PC-9 (cell line): ENCODE measurements at regions of chr1 and their contacts with region 1.

Region 1: DNA sequence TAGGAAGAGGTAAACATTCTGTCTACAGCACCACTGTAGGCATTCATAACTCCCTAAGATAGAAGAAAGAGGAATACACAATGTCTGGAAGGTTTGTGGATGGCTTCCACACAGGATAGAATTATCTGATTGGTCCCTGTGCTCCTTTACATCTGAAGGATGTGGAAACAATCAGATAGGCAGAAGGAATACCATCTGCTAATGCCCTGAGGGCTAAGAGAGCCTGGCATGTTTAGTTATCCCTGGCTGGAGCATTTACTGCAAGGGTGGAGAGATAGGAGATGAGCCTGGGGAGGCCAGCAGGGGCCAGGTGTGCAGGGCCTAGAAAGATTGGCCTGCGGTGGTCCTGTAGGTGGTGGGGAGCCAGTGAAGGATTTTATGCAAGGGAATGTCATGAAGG is 8.6 kb upstream of the ACBD3 start:
- DNase-seq: no peak
- H3K4me3 ChIP-seq: no peak overlapping the region
- H3K27ac ChIP-seq: no peak overlapping the region
- H3K4me1 ChIP-seq: no peaks in the 10 kb centered on the region
- H3K27me3 ChIP-seq: no peaks in the 10 kb centered on the region
- CTCF ChIP-seq: no peak

Region 2: GRCh38 chr1:225877580-225877979 is 317.6 kb before region 1 on chr1:
- CTCF ChIA-PET with region 1: no interaction called
- POLR2A ChIA-PET with region 1: no interaction called
- intact Hi-C with region 1: no loop called
- DNase-seq: peak in 1 of 2 experiments; percentile 62
- H3K4me3 ChIP-seq: no peak overlapping the region
- H3K27ac ChIP-seq: no peak overlapping the region
- H3K4me1 ChIP-seq: peaks cover 81% of the 10 kb centered on the region
- H3K27me3 ChIP-seq: no peaks in the 10 kb centered on the region
- CTCF ChIP-seq: peak; percentile 60

Region 3: DNA sequence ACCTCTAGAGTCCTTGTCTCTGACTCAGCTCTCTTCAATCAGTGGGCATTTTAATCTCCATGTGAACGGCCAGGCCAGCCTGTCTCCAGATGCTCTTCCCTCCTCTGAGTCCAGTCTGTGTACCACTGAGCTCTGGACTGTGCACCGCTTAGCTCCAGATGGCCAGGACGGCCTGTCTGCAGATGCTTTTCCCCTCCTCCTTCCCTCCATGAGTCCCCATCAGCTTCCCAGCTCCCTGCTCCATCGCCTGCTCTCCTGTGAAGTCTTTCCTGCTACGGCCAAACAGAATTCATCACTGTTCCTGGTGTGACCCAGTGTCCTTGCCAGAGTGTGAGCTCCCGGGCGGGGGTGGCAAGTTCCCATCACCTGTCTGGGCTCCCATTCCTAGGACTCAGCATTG is 395.5 kb after region 1 on chr1:
- CTCF ChIA-PET with region 1: no interaction called
- POLR2A ChIA-PET with region 1: interaction called, 10 read pairs
- intact Hi-C with region 1: no loop called
- DNase-seq: no peak
- H3K4me3 ChIP-seq: no peak overlapping the region
- H3K27ac ChIP-seq: no peak overlapping the region
- H3K4me1 ChIP-seq: no peaks in the 10 kb centered on the region
- H3K27me3 ChIP-seq: peaks cover 71% of the 10 kb centered on the region
- CTCF ChIP-seq: no peak